ENCODE measurements at regions of chr13 and their contacts with region 1.

Region 1: DNA sequence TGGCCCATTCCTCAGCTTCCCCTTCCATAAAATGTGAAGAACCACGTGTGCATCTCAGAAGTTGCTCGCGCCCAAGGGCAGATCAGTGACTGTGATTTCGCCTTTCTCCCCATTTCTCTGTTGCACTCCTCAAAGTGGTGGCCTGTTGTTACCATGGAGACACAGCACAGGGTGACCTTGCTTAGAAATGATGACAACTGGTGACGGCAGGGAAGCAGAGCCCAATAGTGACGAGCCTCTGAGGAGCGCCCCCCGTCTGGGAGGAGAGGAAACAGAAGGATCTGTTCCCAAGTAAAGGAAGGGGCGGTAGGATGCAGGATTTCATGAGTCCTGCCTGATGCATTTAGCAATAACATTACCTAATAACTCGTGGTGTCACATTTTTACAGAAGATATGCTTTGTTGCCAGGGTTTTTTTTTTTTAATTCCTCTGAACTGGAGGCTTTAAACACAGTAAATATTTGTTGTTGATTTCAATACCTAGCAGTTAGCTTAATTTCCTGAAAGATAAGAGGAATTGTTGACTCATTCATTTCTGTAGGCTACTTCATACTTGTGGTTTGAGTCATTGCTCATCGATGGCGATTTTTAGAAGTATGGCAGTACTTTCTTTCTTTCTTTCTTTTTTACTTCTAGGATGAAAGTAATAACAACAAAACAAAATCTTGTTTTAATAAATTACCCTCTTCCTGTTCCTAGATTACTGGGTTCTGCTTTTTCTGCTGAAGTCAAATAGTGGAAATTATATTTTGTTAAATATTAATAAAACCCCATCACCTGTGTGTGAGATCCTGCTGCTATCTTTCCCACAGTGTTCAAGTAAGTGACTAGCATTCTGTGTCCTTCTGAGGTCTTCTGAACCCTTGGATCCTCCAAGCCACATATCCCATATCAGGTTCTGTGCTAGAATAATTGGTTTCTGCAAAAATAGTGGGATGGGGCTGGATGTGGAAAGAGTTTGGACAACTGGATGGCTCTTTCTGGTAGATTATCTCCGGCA is 36.0 kb downstream of the MBNL2 start:
- DNase-seq: peak; percentile 83
- H3K4me3 Mint-ChIP-seq: peak overlapping the region; percentile 56
- H3K27ac Mint-ChIP-seq: peak overlapping the region; percentile 96
- H3K4me1 Mint-ChIP-seq: peaks cover 74% of the 10 kb centered on the region
- H3K27me3 Mint-ChIP-seq: no peaks in the 10 kb centered on the region
- CTCF ChIP-seq: no peak

Region 2: DNA sequence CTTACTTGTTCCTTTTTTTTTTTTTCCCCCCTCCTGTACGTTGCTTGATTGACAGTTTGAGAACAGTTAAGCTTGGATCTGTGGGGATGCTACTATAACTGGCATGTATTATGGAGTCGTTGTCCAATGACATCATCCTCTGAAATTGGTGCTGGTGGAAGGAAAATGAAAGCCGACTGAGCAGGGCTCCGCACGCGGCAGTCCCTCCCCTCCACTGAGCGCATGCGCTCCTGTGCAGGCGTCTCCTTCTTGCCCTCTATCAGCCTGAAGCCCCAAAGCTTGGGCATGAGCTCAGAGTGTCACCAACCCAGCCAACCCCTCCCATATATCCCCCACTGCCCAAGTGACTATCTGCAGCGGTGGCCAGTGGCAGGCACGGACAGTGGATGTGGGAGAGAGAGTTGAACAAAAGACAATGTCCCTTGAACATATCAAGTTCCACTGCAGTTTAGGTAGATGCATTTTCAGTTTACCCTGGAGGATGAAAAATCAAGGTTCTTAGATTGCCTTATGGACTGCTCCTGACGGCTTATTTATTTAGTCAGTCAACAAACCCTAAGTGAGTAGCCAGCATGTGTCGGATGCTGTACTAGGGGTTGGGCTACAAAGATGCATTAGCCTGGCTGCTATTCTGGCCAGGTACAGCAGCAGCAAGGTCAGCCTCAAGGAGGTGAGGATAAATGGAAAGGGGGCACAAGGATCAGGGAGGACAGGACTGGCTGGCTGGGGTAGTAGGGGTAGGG is 15.2 kb before region 1 on chr13:
- CTCF ChIA-PET with region 1: interaction called, 3 read pairs
- POLR2A ChIA-PET with region 1: interaction called, 15 read pairs
- intact Hi-C with region 1: no loop called
- DNase-seq: no peak
- H3K4me3 Mint-ChIP-seq: no peak overlapping the region
- H3K27ac Mint-ChIP-seq: peak overlapping the region; percentile 25
- H3K4me1 Mint-ChIP-seq: peaks cover 34% of the 10 kb centered on the region
- H3K27me3 Mint-ChIP-seq: no peaks in the 10 kb centered on the region
- CTCF ChIP-seq: no peak

Region 3: GRCh38 chr13:97268772-97269171 is 10.7 kb after region 1 on chr13:
- CTCF ChIA-PET with region 1: interaction called, 10 read pairs
- POLR2A ChIA-PET with region 1: interaction called, 101 read pairs
- intact Hi-C with region 1: no loop called
- DNase-seq: peak; percentile 27
- H3K4me3 Mint-ChIP-seq: no peak overlapping the region
- H3K27ac Mint-ChIP-seq: peak overlapping the region; percentile 83
- H3K4me1 Mint-ChIP-seq: peaks cover 34% of the 10 kb centered on the region
- H3K27me3 Mint-ChIP-seq: no peaks in the 10 kb centered on the region
- CTCF ChIP-seq: no peak

Region 4: DNA sequence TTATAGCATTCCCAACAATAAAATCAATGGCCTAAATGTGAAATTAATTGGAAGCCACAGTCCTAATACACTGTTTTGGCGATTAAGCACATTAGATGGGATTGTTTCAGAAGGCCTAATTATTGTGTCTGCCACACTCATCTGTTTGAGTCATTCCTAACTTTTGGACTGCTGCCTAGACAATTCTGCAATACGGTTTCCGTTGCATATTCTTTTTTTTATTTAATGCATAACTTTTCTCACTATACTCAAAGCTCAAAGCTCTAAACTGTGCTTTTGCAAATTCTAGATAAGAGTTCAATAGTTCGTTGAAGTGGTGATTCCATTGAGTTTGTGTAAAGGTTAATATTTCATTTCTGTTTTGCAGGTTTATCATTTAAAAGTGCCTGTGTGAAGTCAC is 17.2 kb after region 1 on chr13:
- CTCF ChIA-PET with region 1: interaction called, 17 read pairs
- POLR2A ChIA-PET with region 1: interaction called, 153 read pairs
- intact Hi-C with region 1: loop called (anchors 1 kb)
- DNase-seq: peak; percentile 95
- H3K4me3 Mint-ChIP-seq: peak overlapping the region; percentile 11
- H3K27ac Mint-ChIP-seq: peak overlapping the region; percentile 92
- H3K4me1 Mint-ChIP-seq: peaks cover 65% of the 10 kb centered on the region
- H3K27me3 Mint-ChIP-seq: no peaks in the 10 kb centered on the region
- CTCF ChIP-seq: no peak

Region 5: DNA sequence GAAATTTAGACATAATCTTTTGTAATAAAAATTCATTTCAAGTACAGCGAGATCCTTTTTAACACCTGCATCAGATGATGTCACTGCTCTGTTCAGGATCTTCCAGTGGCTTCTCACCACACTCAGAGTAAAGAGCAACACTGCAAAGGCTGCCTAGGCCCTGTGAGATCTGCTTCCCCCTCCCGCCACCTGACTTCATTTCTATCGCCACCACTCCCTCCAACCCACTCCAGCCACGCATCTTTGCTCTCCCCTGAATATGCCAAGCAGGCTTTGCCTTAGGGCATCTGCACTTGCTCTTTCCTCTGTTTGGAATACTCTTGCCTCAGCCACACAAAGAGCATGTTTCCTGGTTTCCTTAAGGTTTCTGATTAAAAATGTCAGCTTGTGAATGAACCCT is 22.4 kb after region 1 on chr13:
- CTCF ChIA-PET with region 1: interaction called, 17 read pairs
- POLR2A ChIA-PET with region 1: interaction called, 153 read pairs
- intact Hi-C with region 1: no loop called
- DNase-seq: peak; percentile 46
- H3K4me3 Mint-ChIP-seq: peak overlapping the region; percentile 16
- H3K27ac Mint-ChIP-seq: peak overlapping the region; percentile 81
- H3K4me1 Mint-ChIP-seq: peaks cover 63% of the 10 kb centered on the region
- H3K27me3 Mint-ChIP-seq: no peaks in the 10 kb centered on the region
- CTCF ChIP-seq: no peak

Region 6: GRCh38 chr13:97766749-97767148 is 508.6 kb after region 1 on chr13:
- CTCF ChIA-PET with region 1: no interaction called
- POLR2A ChIA-PET with region 1: no interaction called
- intact Hi-C with region 1: no loop called
- DNase-seq: no peak
- H3K4me3 Mint-ChIP-seq: no peak overlapping the region
- H3K27ac Mint-ChIP-seq: peak overlapping the region; percentile 3
- H3K4me1 Mint-ChIP-seq: peaks cover 10% of the 10 kb centered on the region
- H3K27me3 Mint-ChIP-seq: no peaks in the 10 kb centered on the region
- CTCF ChIP-seq: no peak

Region 7: GRCh38 chr13:98222081-98222554 is 964.0 kb after region 1 on chr13:
- CTCF ChIA-PET with region 1: no interaction called
- POLR2A ChIA-PET with region 1: no interaction called
- intact Hi-C with region 1: no loop called
- DNase-seq: no peak
- H3K4me3 Mint-ChIP-seq: no peak overlapping the region
- H3K27ac Mint-ChIP-seq: no peak overlapping the region
- H3K4me1 Mint-ChIP-seq: no peaks in the 10 kb centered on the region
- H3K27me3 Mint-ChIP-seq: no peaks in the 10 kb centered on the region
- CTCF ChIP-seq: no peak